ENCODE measurements at regions of chr7 and their contacts with region 1.

Region 1: DNA sequence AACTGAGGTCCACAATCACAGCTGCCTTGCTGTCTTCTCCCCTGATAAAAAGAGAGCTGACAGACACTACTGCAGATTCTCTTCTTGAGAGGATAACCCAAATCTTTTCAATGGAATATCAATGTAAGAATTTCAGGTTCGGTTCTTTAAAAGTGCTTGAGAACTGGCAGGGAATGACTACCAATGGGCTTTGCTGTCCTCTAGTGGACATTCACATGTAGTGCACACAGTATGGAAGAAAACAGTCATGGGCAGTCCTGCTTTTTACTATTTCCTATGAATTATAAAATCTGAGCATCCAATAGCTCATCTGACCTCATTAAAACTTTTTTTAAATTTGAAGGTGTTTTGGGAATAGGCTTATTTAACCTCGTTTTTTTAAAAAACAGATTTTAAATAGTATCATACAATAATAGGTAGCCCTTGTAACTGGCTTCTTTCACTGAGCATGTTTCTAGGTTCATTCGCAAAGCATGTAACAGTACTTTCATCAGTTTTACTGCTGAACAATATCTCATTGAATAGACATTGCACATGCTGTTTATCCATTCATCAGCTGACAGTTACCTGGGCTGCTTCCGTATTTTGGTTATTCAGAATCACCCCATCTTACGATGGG is 18.3 kb downstream of the FZD9 start:
- DNase-seq: peak; percentile 61 to 65
- ATAC-seq: peak; percentile 75 to 78
- H3K4me3 ChIP-seq: no peak overlapping the region
- H3K27ac ChIP-seq: no peak overlapping the region
- H3K4me1 ChIP-seq: no peaks in the 10 kb centered on the region
- CTCF ChIP-seq: peak; percentile 99
- EP300 ChIP-seq: no peak
- POLR2A ChIP-seq: no peak
- RAD21 ChIP-seq: peak; percentile 91

Region 2: GRCh38 chr7:73329861-73330581 is 121.9 kb before region 1 on chr7:
- CTCF ChIA-PET with region 1: interaction called, 70 read pairs
- POLR2A ChIA-PET with region 1: no interaction called
- DNase-seq: no peak
- ATAC-seq: peak; percentile 26 to 53; a peak in 3 of 6 replicates
- H3K4me3 ChIP-seq: no peak overlapping the region
- H3K27ac ChIP-seq: no peak overlapping the region
- H3K4me1 ChIP-seq: no peaks in the 10 kb centered on the region
- CTCF ChIP-seq: no peak
- EP300 ChIP-seq: no peak
- POLR2A ChIP-seq: no peak
- RAD21 ChIP-seq: no peak

Region 3: GRCh38 chr7:73351447-73352167 is 100.3 kb before region 1 on chr7:
- CTCF ChIA-PET with region 1: interaction called, 57 read pairs
- POLR2A ChIA-PET with region 1: no interaction called
- DNase-seq: no peak
- ATAC-seq: no peak
- H3K4me3 ChIP-seq: no peak overlapping the region
- H3K27ac ChIP-seq: no peak overlapping the region
- H3K4me1 ChIP-seq: no peaks in the 10 kb centered on the region
- CTCF ChIP-seq: no peak
- EP300 ChIP-seq: no peak
- POLR2A ChIP-seq: no peak
- RAD21 ChIP-seq: no peak

Region 4: GRCh38 chr7:73382934-73383503 is 68.9 kb before region 1 on chr7:
- CTCF ChIA-PET with region 1: no interaction called
- POLR2A ChIA-PET with region 1: no interaction called
- DNase-seq: no peak
- ATAC-seq: no peak
- H3K4me3 ChIP-seq: no peak overlapping the region
- H3K27ac ChIP-seq: no peak overlapping the region
- H3K4me1 ChIP-seq: no peaks in the 10 kb centered on the region
- CTCF ChIP-seq: no peak
- EP300 ChIP-seq: no peak
- POLR2A ChIP-seq: no peak
- RAD21 ChIP-seq: no peak

Region 5: DNA sequence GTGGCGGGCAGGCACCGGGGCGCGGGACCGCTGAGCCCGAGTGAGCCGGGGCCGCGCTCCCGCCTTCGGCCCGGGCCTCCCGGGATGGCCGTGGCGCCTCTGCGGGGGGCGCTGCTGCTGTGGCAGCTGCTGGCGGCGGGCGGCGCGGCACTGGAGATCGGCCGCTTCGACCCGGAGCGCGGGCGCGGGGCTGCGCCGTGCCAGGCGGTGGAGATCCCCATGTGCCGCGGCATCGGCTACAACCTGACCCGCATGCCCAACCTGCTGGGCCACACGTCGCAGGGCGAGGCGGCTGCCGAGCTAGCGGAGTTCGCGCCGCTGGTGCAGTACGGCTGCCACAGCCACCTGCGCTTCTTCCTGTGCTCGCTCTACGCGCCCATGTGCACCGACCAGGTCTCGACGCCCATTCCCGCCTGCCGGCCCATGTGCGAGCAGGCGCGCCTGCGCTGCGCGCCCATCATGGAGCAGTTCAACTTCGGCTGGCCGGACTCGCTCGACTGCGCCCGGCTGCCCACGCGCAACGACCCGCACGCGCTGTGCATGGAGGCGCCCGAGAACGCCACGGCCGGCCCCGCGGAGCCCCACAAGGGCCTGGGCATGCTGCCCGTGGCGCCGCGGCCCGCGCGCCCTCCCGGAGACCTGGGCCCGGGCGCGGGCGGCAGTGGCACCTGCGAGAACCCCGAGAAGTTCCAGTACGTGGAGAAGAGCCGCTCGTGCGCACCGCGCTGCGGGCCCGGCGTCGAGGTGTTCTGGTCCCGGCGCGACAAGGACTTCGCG is 17.8 kb before region 1 on chr7:
- CTCF ChIA-PET with region 1: interaction called, 38 read pairs
- POLR2A ChIA-PET with region 1: no interaction called
- DNase-seq: no peak
- ATAC-seq: peak in 1 of 2 experiments; percentile 11; a peak in 3 of 6 replicates
- H3K4me3 ChIP-seq: peak overlapping the region; percentile 51
- H3K27ac ChIP-seq: peak overlapping the region; percentile 71 to 85
- H3K4me1 ChIP-seq: peaks cover 15% of the 10 kb centered on the region
- CTCF ChIP-seq: peak; percentile 24; the same call in 1 of the 3 replicates
- EP300 ChIP-seq: no peak
- POLR2A ChIP-seq: no peak
- RAD21 ChIP-seq: no peak

Region 6: GRCh38 chr7:73470208-73470607 is 18.3 kb after region 1 on chr7:
- CTCF ChIA-PET with region 1: interaction called, 14 read pairs
- POLR2A ChIA-PET with region 1: no interaction called
- DNase-seq: no peak
- ATAC-seq: no peak
- H3K4me3 ChIP-seq: no peak overlapping the region
- H3K27ac ChIP-seq: no peak overlapping the region
- H3K4me1 ChIP-seq: no peaks in the 10 kb centered on the region
- CTCF ChIP-seq: no peak
- EP300 ChIP-seq: no peak
- POLR2A ChIP-seq: no peak
- RAD21 ChIP-seq: no peak

Region 7: DNA sequence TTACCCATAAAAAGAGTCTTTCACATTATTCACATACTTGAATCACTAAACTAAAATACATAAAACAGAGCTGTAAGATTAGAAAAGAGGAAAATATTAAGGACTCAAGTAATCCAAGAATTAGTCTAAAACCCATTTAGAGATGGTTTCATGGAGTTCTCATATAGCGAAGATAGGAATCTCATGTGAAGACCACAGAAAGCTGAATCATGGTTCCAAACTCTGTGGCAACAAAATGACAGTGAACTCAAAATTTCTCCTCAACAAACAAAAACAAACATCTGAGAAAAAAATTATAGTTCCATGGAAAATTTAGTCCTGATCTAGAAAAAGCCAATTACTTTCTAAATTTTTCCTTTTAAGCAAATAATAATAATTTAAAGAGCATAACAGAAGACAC is 35.6 kb after region 1 on chr7:
- CTCF ChIA-PET with region 1: interaction called, 10 read pairs
- POLR2A ChIA-PET with region 1: no interaction called
- DNase-seq: no peak
- ATAC-seq: no peak
- H3K4me3 ChIP-seq: no peak overlapping the region
- H3K27ac ChIP-seq: no peak overlapping the region
- H3K4me1 ChIP-seq: no peaks in the 10 kb centered on the region
- CTCF ChIP-seq: no peak
- EP300 ChIP-seq: no peak
- POLR2A ChIP-seq: no peak
- RAD21 ChIP-seq: no peak

Region 8: GRCh38 chr7:73721377-73721817 is 269.5 kb after region 1 on chr7:
- CTCF ChIA-PET with region 1: no interaction called
- POLR2A ChIA-PET with region 1: no interaction called
- DNase-seq: peak in 1 of 2 experiments; percentile 59
- ATAC-seq: peak in 1 of 2 experiments; percentile 10; a peak in 1 of 6 replicates
- H3K4me3 ChIP-seq: no peak overlapping the region
- H3K27ac ChIP-seq: peak overlapping the region; percentile 99 to 100
- H3K4me1 ChIP-seq: peaks cover 49% of the 10 kb centered on the region
- CTCF ChIP-seq: no peak
- EP300 ChIP-seq: no peak
- POLR2A ChIP-seq: no peak
- RAD21 ChIP-seq: no peak; a peak in 1 of 5 replicates